ENCODE measurements at regions of chr15 and their contacts with region 1.

Region 1: DNA sequence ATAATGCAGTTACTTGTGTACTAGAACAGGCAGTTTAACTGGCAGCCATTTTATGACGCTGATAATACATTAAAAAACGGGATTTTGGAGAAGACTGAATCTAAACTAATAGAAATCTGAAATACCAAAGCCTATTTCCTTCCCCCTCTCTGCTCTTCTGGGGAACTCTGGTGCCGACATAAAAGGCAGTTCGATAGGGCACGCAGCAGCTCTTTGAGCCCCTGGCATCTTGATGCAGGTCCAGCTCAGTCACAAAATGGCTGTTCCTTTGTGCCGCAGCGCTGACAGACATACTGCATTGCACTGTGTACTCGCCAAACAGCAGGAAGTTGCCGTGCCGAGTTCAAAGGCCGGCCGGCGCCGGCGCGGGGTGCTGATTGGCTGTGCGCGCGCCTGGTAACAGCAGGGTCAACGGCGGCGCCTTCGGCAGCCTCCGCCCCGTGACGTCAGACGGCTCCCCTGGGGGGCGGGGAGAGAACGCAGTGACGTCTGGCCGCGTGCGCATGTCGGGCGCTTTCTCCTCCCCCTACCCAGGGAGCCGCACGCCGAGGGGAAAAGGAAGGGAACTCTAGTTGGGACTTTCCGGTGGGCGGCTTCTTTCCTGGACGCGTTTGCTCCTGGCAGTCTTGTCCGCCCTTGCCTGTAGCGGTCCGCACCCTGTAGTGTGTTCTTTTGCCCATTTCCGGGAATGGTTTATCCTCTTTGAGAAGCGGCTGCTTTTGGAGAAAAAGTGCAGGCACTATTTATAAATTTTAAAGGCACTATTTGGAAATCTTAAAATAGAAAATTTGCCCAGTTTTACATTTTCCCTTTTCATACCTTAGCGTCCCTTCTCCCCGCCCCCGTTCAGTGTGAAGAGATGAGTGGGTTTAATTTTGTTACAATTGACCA is 4.1 kb downstream of the CHD2 start:
- DNase-seq: peak; percentile 99
- ATAC-seq: peak; percentile 73 to 91 (median 82)
- H3K4me3 ChIP-seq: peak overlapping the region; percentile 52 to 64 (median 63)
- H3K27ac ChIP-seq: peak overlapping the region; percentile 98 to 99 (median 99)
- H3K4me1 ChIP-seq: peaks cover 0 to 41% (median 3%) of the 10 kb centered on the region in 4 donors
- H3K27me3 ChIP-seq: no peaks in the 10 kb centered on the region
- CTCF ChIP-seq: no peak
- POLR2A ChIP-seq: peak; percentile 98

Region 2: GRCh38 chr15:92808978-92809879 is 95.0 kb before region 1 on chr15:
- intact Hi-C with region 1: loop called in 1 of 2 experiments (anchors 5 kb)
- DNase-seq: peak; percentile 98 to 99 (median 98)
- ATAC-seq: peak; percentile 69 to 86 (median 76)
- H3K4me3 ChIP-seq: peak overlapping the region; percentile 52 to 61 (median 60)
- H3K27ac ChIP-seq: peak overlapping the region; percentile 99 to 100 (median 100)
- H3K4me1 ChIP-seq: peaks cover 0 to 27% (median 12%) of the 10 kb centered on the region in 4 donors
- H3K27me3 ChIP-seq: no peaks in the 10 kb centered on the region
- CTCF ChIP-seq: peak; percentile 98 to 100 (median 100)
- POLR2A ChIP-seq: peak; percentile 78

Measured in right lobe of liver (tissue), 6 donors.